ENCODE measurements at regions of chr9 and their contacts with region 1.

Region 1: DNA sequence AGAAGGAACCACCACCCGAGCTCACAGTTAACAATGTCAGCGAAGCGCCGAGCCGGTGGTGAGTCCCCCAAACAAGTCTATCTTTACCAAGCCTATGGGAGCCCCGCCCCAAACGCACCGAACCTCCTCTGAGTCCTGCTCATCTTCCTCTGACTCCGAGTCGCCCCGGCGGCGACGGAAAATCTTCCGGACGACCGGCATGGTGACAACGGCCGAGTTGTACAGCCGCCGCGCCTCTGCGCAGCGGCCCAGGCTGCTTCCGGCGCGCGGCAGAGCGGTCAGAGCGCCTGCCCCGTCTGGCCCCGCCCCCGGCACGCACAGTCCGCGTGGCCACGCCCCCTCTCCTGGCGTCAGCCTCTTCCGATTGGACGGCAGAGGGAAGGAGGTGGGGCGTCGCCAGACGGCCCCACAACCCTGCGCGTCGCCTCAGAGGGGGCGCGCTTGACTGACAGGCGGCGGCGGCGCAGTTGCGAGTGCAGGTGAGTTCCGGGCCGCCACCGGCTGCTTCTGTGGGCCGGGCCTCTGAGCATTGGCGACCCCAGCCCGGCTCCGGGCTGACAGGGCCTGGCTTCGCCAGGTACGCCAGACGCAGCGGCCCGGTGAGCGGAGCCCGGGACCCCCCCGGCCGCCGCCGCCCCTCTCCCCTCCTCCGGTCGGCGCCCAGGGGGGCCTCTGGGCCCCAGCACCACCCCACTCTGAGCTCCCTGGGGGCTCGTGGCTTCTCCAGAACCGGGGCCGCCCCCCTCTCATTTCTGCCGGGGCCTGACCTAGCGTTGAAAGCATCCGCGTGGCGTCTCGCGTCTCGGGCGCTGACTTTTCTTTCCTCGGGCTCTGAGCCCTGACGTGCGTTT is at the starts of genes C9orf78 and USP20:
- DNase-seq: peak; percentile 97
- ATAC-seq: peak; percentile 91
- H3K4me3 Mint-ChIP-seq: peak within 1 kb of the TSS; percentile 98
- H3K27ac Mint-ChIP-seq: peak within 1 kb of the TSS; percentile 99
- H3K4me1 Mint-ChIP-seq: peaks cover 57% of the 10 kb centered on the region
- H3K27me3 Mint-ChIP-seq: no peaks in the 10 kb centered on the region
- total RNA-seq, gene C9orf78: 89.7 to 91.7 TPM
- total RNA-seq, gene USP20: 86.2 to 87.4 TPM

Region 2: GRCh38 chr9:129823935-129824601 is 11.2 kb before region 1 on chr9 and contains the start of gene TOR1A:
- CTCF ChIA-PET with region 1: interaction called, 3 read pairs
- POLR2A ChIA-PET with region 1: interaction called, 13 read pairs
- DNase-seq: peak; percentile 96
- ATAC-seq: peak; percentile 90
- H3K4me3 Mint-ChIP-seq: peak within 1 kb of the TSS; percentile 86
- H3K27ac Mint-ChIP-seq: peak within 1 kb of the TSS; percentile 80
- H3K4me1 Mint-ChIP-seq: peaks cover 27% of the 10 kb centered on the region
- H3K27me3 Mint-ChIP-seq: no peaks in the 10 kb centered on the region
- total RNA-seq, gene TOR1A: 54.6 to 58.4 TPM

Region 3: GRCh38 chr9:129863059-129863690 is 27.9 kb after region 1 on chr9:
- CTCF ChIA-PET with region 1: interaction called, 5 read pairs
- POLR2A ChIA-PET with region 1: interaction called, 27 read pairs
- DNase-seq: peak; percentile 93
- ATAC-seq: peak; percentile 84
- H3K4me3 Mint-ChIP-seq: peak overlapping the region; percentile 55
- H3K27ac Mint-ChIP-seq: peak overlapping the region; percentile 92
- H3K4me1 Mint-ChIP-seq: peaks cover 80% of the 10 kb centered on the region
- H3K27me3 Mint-ChIP-seq: no peaks in the 10 kb centered on the region

Region 4: GRCh38 chr9:129868916-129869486 is 33.8 kb after region 1 on chr9:
- CTCF ChIA-PET with region 1: interaction called, 5 read pairs
- POLR2A ChIA-PET with region 1: interaction called, 27 read pairs
- DNase-seq: peak; percentile 96
- ATAC-seq: peak; percentile 85
- H3K4me3 Mint-ChIP-seq: peak overlapping the region; percentile 67
- H3K27ac Mint-ChIP-seq: peak overlapping the region; percentile 95
- H3K4me1 Mint-ChIP-seq: peaks cover 84% of the 10 kb centered on the region
- H3K27me3 Mint-ChIP-seq: no peaks in the 10 kb centered on the region

Region 5: GRCh38 chr9:129919841-129920240 is 84.6 kb after region 1 on chr9:
- CTCF ChIA-PET with region 1: no interaction called
- POLR2A ChIA-PET with region 1: no interaction called
- DNase-seq: no peak
- ATAC-seq: no peak
- H3K4me3 Mint-ChIP-seq: no peak overlapping the region
- H3K27ac Mint-ChIP-seq: no peak overlapping the region
- H3K4me1 Mint-ChIP-seq: peaks cover 13% of the 10 kb centered on the region
- H3K27me3 Mint-ChIP-seq: no peaks in the 10 kb centered on the region

Region 6: GRCh38 chr9:129981180-129981907 is 146.1 kb after region 1 on chr9:
- CTCF ChIA-PET with region 1: no interaction called
- POLR2A ChIA-PET with region 1: no interaction called
- DNase-seq: no peak
- ATAC-seq: no peak
- H3K4me3 Mint-ChIP-seq: no peak overlapping the region
- H3K27ac Mint-ChIP-seq: peak overlapping the region; percentile 4
- H3K4me1 Mint-ChIP-seq: peaks cover 36% of the 10 kb centered on the region
- H3K27me3 Mint-ChIP-seq: no peaks in the 10 kb centered on the region